ENCODE measurements at regions of chr14 and their contacts with region 1.

Region 1: DNA sequence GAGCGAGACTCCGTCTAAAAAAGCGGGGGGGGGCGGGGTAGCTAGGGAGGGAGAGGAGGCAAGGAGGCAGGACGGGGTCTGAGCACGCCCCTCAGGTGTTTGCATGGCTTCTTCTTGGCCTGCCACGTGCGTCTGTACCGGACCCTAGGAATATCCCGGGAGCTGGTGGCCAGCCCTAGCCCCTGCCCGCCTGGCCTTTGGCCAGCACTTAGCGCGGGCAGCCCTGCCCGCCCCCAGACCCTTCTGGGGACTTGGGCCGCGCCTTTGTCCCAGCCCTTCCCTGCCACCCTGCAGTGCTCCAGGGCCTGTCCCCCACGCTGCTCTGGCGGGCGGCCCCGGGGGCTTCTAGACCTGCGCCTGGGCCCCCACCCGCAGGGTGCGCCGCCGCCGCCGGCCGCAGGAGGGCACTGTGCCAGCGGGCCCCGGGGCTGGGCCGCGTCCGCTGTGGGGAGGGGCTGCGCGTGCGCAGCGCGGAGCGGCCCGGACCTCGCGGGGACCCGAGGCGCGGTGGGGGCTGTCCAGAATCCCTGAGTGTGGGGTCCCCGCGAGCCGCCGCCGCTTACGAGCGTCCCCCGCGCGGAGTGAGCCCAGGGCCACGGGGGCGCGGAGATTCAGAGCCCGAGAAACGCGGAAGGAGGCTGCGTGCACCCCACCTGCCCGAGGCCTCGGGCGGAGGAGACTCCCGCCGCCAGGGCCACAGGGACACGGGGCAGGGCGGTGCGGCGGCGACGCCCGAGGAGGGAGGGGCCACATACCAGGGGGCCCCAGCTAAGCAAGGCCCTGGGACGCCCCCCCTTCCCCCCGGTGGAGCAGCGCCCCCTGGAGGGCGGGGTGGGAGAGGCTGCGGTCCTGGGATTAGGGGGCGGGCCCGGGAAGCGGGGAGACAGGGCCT is 21.0 kb downstream of the SLC25A29 start:
- DNase-seq: peak; percentile 96
- CTCF ChIP-seq: peak; percentile 90

Region 2: DNA sequence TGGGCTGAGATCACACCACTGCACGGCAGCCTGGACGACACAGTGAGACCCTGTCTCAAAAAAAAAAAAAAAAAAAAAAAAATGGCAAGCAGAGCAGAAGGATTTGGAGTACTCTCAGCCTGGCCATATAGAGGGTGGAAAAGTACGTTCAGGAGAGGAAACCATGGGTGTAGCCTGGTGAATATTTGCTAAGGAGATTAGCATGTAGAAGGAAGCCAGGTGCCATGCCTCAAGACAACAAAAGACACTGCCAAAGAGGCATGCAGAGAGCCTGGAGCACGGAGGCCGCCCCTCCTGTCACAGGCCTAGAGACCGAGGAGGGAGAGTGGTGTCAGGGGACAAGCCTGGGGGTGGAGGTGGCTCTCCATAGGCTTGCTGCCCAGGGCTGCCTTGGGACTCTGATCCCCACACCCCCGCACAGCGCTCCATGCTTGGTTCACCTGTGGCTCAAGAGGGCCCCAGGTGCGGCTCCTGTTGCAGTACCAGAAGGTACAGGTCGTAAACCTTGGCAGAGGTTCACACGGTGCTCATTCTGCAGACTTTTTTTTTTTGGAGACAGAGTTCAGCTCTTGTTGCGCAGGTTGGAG is 97.9 kb before region 1 on chr14:
- CTCF ChIA-PET with region 1: no interaction called
- POLR2A ChIA-PET with region 1: no interaction called
- DNase-seq: no peak
- CTCF ChIP-seq: no peak

Region 3: GRCh38 chr14:100256339-100256895 is 28.9 kb before region 1 on chr14:
- CTCF ChIA-PET with region 1: interaction called, 40 read pairs
- POLR2A ChIA-PET with region 1: no interaction called
- DNase-seq: no peak
- CTCF ChIP-seq: no peak

Region 4: GRCh38 chr14:100271247-100271939 is 13.9 kb before region 1 on chr14:
- CTCF ChIA-PET with region 1: interaction called, 54 read pairs
- POLR2A ChIA-PET with region 1: interaction called, 3 read pairs
- DNase-seq: no peak
- CTCF ChIP-seq: no peak

Region 5: GRCh38 chr14:100312877-100313400 is 27.7 kb after region 1 on chr14:
- CTCF ChIA-PET with region 1: interaction called, 10 read pairs
- POLR2A ChIA-PET with region 1: no interaction called
- DNase-seq: no peak
- CTCF ChIP-seq: no peak

Region 6: GRCh38 chr14:100383727-100384158 is 98.5 kb after region 1 on chr14:
- CTCF ChIA-PET with region 1: interaction called, 10 read pairs
- POLR2A ChIA-PET with region 1: no interaction called
- DNase-seq: peak; percentile 83
- CTCF ChIP-seq: peak; percentile 91

Region 7: GRCh38 chr14:100554082-100554677 is 268.9 kb after region 1 on chr14:
- CTCF ChIA-PET with region 1: no interaction called
- POLR2A ChIA-PET with region 1: no interaction called
- DNase-seq: no peak
- CTCF ChIP-seq: no peak